ENCODE measurements at regions of chr7 and their contacts with region 1.

Region 1: DNA sequence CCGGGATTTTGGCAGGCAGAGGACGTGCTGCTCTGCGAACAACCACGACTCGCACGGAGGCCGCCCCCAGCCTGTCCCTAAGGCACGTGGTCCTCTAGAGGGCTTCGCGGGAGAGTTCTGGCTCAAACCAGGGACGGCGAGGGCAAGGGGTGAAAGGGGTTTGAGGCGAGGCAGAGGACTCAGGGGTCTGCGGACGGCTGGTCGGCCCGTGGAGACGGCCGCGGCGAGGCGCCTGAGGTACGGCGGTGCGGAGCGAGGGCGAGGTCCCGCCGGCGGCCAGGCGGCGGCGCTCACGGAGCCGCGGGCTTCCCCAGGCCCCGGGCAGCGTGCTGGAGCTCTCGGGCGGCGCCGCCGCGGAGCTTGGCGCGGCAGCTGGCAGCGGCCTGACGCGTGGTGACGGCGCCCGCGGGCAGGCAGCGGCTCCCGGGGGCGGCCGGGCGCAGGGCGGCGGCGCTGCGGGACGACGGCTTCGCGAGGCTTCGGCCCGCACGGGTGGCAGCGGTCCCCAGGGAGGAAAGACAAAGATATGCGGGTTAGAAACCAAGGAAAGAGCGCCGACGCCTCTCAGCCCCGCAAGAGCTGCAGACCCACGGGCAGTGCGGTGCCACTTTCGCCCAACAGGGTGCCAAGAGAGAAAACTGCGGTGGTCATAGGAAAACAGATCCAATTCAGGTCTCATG is 44.8 kb downstream of the ZNF800 start:
- DNase-seq: no peak
- H3K4me3 ChIP-seq: peak overlapping the region; percentile 39
- H3K27me3 ChIP-seq: no peaks in the 10 kb centered on the region
- CTCF ChIP-seq: peak; percentile 48

Region 2: GRCh38 chr7:127359011-127359410 is 11.3 kb after region 1 on chr7:
- CTCF ChIA-PET with region 1: interaction called, 19 read pairs
- POLR2A ChIA-PET with region 1: no interaction called
- DNase-seq: no peak
- H3K4me3 ChIP-seq: no peak overlapping the region
- H3K27me3 ChIP-seq: no peaks in the 10 kb centered on the region
- CTCF ChIP-seq: no peak

Region 3: GRCh38 chr7:127365164-127365956 is 17.7 kb after region 1 on chr7:
- CTCF ChIA-PET with region 1: interaction called, 19 read pairs
- POLR2A ChIA-PET with region 1: no interaction called
- DNase-seq: no peak
- H3K4me3 ChIP-seq: no peak overlapping the region
- H3K27me3 ChIP-seq: no peaks in the 10 kb centered on the region
- CTCF ChIP-seq: no peak